Pancreas (tissue), 10 donors: ENCODE measurements at regions of chr2 and their contacts with region 1.

Region 1: DNA sequence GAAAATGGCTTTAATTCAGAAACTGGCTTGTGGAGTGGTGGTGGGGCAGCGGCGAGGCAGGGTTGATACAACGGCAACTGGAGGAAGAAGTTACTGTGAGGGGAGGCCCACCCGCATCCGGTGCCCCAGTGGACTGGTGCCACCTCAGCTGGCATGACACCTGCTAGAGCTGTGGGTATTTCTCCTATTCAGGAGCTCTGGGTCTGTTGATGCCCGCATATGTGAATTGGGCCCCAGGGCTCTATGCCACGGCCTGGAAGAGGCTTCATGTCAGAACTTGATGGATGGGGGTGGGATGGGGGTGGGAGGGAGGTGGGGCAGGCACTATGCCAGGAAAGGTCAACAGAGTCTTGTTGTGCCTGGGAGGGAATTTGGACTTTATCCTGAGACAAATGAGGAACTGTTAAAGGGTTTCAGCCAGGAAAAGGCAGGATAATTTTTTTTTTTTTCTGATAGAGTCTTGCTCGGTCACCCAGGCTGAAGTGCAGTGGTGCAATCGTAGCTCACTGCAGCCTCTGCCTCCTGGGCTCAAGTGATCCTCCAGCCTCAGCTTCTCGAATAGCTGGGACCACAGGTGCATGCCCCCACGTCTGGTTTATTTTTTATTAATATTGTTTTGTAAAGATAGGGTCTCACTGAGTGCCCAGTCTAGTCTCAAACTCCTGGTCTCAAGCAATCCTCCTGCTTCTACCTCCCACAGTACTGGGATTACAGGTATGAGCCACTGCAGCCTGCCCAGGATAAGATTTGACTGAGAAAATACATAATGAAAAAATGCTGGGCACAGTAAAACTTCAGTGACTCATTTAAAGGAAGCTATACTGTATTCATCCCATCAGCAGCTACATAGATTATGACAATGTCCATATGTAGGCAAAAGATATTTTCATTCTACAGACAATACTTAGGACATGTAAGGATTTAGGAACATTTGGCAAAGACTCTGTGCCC is 52.6 kb downstream of the SH2D6 start:
- DNase-seq: peak; percentile 69 to 85 (median 80)
- ATAC-seq: peak; percentile 73 to 80 (median 78)
- H3K4me3 ChIP-seq: no peak overlapping the region
- H3K27ac ChIP-seq: peak overlapping the region; percentile 55 to 81 (median 59)
- H3K4me1 ChIP-seq: peaks cover 16 to 39% (median 37%) of the 10 kb centered on the region in 3 donors
- H3K27me3 ChIP-seq: no peaks in the 10 kb centered on the region
- CTCF ChIP-seq: no peak

Region 2: DNA sequence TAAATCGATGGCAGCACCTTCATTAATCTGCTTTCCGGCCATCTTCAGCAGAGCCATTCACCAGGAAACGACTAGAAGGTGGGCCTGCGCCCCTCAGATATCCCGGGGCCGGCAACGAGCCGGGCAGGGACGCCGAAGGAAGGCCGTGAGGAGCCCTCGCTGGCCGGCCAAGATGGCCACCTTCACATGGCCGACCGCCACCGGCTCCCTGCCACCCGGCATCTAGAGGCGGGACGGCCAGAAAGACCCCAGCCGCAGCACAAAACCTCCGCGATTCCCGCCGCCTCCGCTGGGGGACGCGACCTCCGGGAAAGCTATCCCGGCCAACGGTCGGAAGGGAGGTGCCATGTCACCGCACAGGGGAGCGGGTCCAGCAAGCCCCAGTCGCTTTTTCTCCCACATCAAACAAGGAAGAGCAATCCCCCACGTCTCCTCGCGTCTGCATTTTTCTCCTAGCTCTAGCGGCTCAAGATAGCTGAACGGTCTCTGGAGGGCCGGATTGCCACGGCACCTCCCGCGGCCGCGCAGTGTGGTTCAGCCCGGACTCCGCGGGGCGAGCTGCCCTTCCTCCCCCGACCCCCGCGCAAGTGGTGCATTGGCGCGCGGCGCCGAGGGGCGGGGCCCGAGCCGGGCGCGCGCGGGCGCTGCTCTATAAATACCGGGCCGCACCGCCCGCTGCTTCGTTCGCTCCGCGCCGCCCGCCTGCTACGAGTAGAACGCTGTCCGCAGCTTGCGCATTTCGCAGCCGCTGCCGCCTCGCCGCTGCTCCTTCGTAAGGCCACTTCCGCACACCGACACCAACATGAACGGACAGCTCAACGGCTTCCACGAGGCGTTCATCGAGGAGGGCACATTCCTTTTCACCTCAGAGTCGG is 67.6 kb after region 1 on chr2 and contains the start of gene MAT2A:
- intact Hi-C with region 1: loop called in 1 of 3 experiments (anchors 10 kb)
- DNase-seq: peak; percentile 93 to 98 (median 96)
- ATAC-seq: peak; percentile 82 to 90 (median 84)
- H3K4me3 ChIP-seq: peak within 1 kb of the TSS; percentile 66 to 98 (median 92)
- H3K27ac ChIP-seq: peak within 1 kb of the TSS; percentile 94 to 99 (median 98)
- H3K4me1 ChIP-seq: peaks cover 9 to 45% (median 22%) of the 10 kb centered on the region in 3 donors
- H3K27me3 ChIP-seq: no peaks in the 10 kb centered on the region
- CTCF ChIP-seq: peak; percentile 45 to 76 (median 72)
- total RNA-seq, gene MAT2A: 127 to 447 (median 246) TPM

Region 3: DNA sequence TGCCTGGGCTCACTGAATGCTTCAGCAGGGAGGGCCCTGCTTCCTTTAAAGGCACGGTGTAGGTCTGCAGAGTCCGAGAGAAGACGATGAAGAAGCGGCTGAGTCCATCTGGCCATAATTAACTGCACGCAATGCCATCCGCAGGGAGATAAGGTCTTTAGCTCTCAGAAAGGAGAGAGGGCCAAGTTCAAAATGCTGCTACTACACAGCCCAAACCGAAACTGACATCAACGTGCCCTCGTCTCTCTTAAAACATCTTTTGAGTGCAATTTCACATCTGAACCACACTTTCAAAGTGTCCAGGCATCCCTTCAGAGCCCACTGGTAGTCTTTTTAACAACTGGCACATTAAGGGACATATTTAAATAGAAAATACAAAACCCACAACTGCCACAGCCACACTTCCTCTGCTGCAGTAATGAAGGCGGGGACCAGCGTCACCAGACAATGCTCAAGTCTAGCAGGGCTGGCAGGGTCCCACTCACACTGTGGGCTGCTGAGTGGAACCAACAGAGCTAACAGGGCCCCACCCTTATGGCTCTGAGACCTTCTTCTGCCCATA is 381.9 kb after region 1 on chr2:
- intact Hi-C with region 1: no loop called
- DNase-seq: peak in 1 of 6 donors; percentile 2
- ATAC-seq: peak in 2 of 4 donors; percentile 44 to 65
- H3K4me3 ChIP-seq: no peak overlapping the region
- H3K27ac ChIP-seq: peak overlapping the region in 2 of 4 donors; percentile 13 to 22
- H3K4me1 ChIP-seq: peaks cover 0 to 8% (median 0%) of the 10 kb centered on the region in 3 donors
- H3K27me3 ChIP-seq: no peaks in the 10 kb centered on the region
- CTCF ChIP-seq: no peak

Region 4: DNA sequence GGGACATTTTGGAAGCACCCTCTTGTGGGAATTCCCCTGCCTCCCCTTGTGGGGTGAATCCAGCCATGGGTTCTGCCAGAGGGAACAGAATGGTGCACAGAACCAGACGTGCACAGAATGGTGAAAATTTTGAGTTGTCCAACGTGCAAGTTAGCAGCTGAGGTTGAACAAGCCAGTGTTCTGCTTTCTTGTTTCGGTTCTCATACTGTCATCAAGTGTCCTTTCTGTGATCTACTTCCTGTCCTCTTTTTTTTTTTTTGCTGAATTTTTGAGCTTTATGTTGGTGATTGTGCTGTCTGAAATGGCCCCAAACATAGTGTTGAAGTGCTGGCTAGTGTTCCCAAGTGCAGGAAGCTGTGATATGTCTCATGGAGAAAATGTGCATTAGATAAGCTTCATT is 887.8 kb after region 1 on chr2:
- intact Hi-C with region 1: no loop called
- DNase-seq: no peak
- ATAC-seq: peak in 1 of 4 donors; percentile 23
- H3K4me3 ChIP-seq: no peak overlapping the region
- H3K27ac ChIP-seq: no peak overlapping the region
- H3K4me1 ChIP-seq: peaks cover 0 to 6% (median 3%) of the 10 kb centered on the region in 3 donors
- H3K27me3 ChIP-seq: no peaks in the 10 kb centered on the region
- CTCF ChIP-seq: no peak